OCI-LY7 (cell line): ENCODE measurements at regions of chr10 and their contacts with region 1.

Region 1: DNA sequence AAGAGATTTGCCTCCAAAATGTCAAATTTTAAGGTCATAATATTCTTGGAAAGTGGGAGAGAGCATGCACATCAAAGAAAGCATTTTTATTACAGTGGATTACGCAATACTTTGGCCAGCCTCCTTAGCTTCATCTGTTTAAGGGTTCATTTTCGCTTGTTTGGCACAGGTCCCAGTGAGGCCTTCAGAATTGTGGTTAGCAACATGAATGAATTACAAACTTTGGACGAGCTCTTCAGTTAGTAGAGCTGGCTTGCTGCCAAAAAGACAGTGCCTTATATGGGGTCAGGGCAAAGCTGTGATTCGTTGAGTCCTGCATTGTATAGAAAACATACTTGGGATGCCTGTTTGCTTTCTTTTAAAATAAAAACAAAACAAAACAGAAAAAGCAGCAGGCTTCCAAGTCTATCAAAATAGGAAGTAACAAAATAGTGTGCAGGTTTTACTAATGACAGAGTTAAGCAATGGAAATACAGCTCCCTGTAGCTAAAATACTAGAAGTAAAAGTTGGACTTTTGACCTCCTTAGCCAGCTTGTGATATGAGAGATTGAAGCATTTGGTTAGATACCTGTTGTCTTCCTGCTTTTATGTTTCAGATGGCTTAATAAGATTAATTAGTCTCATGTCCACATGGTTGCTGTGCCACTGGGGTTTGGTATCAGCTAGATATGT is 190.8 kb downstream of the MLLT10 start:
- DNase-seq: peak; percentile 38
- H3K4me3 ChIP-seq: no peak overlapping the region
- H3K27ac ChIP-seq: no peak overlapping the region
- H3K4me1 ChIP-seq: no peaks in the 10 kb centered on the region
- CTCF ChIP-seq: no peak

Region 2: DNA sequence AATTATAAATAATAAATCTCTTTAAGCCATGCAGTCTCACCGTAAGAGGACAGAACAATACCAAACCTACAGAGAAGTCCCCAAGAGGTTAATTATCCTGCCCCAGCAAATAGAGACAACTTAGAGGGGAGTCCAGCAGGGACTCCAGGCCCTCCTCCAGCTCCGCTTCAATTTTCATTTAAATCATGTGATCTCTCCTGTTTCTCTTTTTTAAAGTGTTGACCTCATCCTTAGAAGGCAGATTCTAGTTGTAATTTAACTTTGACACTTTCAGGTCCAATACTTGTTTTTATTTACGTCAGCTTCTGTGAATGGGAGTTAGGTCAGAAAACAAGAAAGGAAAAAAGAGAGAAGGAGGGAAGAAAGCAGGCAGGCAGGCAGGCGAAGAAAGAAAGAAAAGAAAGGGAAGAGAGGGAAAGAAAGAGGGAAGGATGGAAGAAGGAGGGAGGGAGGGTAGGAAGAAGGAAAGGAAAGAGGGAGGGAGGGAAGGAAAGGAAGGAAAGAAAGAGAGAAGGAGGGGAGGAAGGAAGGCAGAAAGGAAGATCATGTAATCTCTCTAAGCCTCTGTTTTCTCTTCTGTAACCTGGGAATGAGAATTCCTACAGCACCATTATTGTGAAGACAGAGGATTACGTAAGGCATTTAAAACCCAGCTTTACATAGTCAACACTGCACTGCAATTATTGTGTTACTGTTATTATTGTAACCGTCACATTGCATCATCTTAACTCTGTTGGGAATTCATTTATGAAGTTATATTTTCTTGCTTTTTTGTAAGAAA is 427.0 kb before region 1 on chr10:
- CTCF ChIA-PET with region 1: no interaction called
- POLR2A ChIA-PET with region 1: interaction called, 16 read pairs
- intact Hi-C with region 1: no loop called
- DNase-seq: no peak
- H3K4me3 ChIP-seq: no peak overlapping the region
- H3K27ac ChIP-seq: no peak overlapping the region
- H3K4me1 ChIP-seq: no peaks in the 10 kb centered on the region
- CTCF ChIP-seq: no peak

Region 3: GRCh38 chr10:21449288-21449966 is 275.4 kb before region 1 on chr10:
- CTCF ChIA-PET with region 1: no interaction called
- POLR2A ChIA-PET with region 1: no interaction called
- intact Hi-C with region 1: no loop called
- DNase-seq: no peak
- H3K4me3 ChIP-seq: no peak overlapping the region
- H3K27ac ChIP-seq: no peak overlapping the region
- H3K4me1 ChIP-seq: no peaks in the 10 kb centered on the region
- CTCF ChIP-seq: no peak

Region 4: DNA sequence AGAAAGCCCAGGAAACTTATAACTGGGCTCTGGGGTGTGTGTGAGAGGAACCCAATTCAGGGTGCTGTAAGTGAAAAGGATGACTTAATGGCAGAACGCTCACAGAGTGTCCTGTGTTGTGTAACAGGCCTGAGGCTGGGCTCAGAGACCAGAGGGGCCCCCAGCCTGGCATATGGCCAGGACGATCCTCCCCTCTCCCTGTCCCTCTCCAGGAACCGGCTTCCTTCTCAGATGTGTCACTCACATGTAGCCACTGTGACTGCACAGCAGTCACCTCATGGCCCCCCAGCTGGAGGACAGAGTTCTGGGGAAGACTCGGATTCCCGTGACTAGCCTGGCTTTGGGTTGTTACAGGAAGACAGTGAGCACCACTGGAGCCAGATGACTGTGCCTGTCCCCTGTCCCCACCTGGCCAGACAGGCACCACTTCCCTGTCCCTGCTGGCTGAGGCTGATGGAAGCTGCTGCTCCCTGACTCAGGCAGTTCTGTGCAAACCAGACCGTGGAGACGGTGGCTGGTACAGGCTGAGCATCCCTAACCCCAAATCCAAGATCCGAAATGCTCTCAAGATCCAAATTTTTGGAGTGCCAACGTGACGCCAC is 29.7 kb after region 1 on chr10:
- CTCF ChIA-PET with region 1: no interaction called
- POLR2A ChIA-PET with region 1: no interaction called
- intact Hi-C with region 1: no loop called
- DNase-seq: no peak
- H3K4me3 ChIP-seq: no peak overlapping the region
- H3K27ac ChIP-seq: no peak overlapping the region
- H3K4me1 ChIP-seq: no peaks in the 10 kb centered on the region
- CTCF ChIP-seq: no peak